HEK293 (cell line): ENCODE measurements at regions of chr6 and their contacts with region 1.

Region 1: DNA sequence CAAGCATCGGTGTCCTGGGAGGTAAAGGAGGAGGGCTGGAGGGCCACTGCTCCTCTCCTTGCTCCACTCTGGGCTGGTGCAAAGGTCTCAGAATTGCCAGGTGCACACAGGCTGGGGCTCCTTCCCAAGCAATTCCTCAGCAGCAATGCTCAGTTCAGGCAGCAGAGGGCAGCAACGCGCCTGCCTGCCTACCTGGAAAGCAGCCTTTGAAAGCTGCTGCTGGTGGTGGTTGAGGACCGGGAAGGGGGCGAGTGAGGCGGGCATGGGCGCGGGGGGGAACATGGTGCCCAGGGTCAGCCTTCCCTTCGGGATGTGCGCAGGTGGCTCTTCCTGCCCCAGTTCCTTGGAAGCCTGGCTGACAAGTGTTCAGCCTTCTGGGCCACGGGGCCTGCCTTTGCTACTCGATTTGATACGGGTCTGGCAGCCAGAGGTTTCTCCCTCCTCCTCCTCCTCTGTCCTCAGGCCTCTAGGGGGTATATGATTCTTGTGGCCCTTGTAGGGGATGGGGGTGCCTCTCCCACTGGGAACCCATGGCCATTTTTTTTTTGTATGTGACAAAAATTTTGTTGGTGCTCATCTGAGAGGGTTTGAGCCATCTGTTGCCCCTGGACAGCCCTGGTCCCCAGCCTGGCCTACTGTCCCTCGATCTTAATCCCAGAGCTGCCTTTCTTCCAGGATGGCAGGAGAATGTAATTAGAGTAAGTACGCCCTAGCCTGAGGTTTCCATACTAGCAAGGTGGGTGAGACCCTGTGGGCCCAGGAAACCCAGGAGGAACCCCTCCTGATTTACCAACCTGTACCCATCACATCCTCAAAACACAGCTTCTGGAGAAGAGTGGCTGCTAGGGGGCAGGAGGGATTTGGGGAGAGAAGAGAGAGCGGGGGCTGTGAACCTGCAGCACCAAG is 20.1 kb downstream of the MRPS18A start:
- H3K4me3 ChIP-seq: peak overlapping the region; percentile 10; the same call in 1 of the 2 replicates
- H3K27ac ChIP-seq: peak overlapping the region; percentile 19
- H3K4me1 ChIP-seq: peaks cover 3% of the 10 kb centered on the region; the same call in 1 of the 2 replicates
- CTCF ChIP-seq: peak; percentile 97

Region 2: GRCh38 chr6:43608310-43608763 is 59.2 kb before region 1 on chr6:
- CTCF ChIA-PET with region 1: interaction called, 28 read pairs
- POLR2A ChIA-PET with region 1: no interaction called
- H3K4me3 ChIP-seq: no peak overlapping the region
- H3K27ac ChIP-seq: no peak overlapping the region
- H3K4me1 ChIP-seq: no peaks in the 10 kb centered on the region
- CTCF ChIP-seq: peak; percentile 83

Region 3: GRCh38 chr6:43644931-43645612 is 22.4 kb before region 1 on chr6 and contains the start of gene RSPH9:
- CTCF ChIA-PET with region 1: interaction called, 14 read pairs
- POLR2A ChIA-PET with region 1: interaction called, 4 read pairs
- H3K4me3 ChIP-seq: peak within 1 kb of the TSS; percentile 37
- H3K27ac ChIP-seq: peak within 1 kb of the TSS; percentile 46; the same call in 1 of the 2 replicates
- H3K4me1 ChIP-seq: peaks cover 7% of the 10 kb centered on the region
- CTCF ChIP-seq: no peak

Region 4: DNA sequence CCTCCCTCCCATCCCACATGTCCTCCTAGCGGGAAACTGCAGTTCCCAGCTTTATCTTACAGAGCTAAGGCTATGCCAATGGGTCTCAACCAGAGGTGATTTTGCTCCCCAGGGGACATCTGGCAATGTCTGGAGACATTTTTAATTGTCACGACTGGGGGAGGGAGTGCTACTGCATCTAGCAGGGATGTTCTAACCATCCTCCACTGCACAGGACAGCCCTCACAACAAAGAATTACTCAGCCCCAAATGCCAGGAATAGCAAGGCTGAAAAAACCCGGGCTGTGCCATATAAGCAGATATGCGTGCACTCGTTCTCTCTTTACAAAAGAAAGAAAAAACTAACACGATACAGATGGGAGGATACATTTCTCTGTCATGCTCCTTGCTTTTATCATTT is 11.6 kb after region 1 on chr6:
- CTCF ChIA-PET with region 1: interaction called, 101 read pairs
- POLR2A ChIA-PET with region 1: interaction called, 4 read pairs
- H3K4me3 ChIP-seq: no peak overlapping the region
- H3K27ac ChIP-seq: no peak overlapping the region
- H3K4me1 ChIP-seq: peaks cover 15% of the 10 kb centered on the region
- CTCF ChIP-seq: no peak

Region 5: GRCh38 chr6:43695215-43695966 is 27.9 kb after region 1 on chr6:
- CTCF ChIA-PET with region 1: interaction called, 101 read pairs
- POLR2A ChIA-PET with region 1: no interaction called
- H3K4me3 ChIP-seq: no peak overlapping the region
- H3K27ac ChIP-seq: no peak overlapping the region; the same call in 1 of the 2 replicates
- H3K4me1 ChIP-seq: peaks cover 16% of the 10 kb centered on the region
- CTCF ChIP-seq: no peak

Region 6: GRCh38 chr6:43723737-43724295 is 56.3 kb after region 1 on chr6:
- CTCF ChIA-PET with region 1: interaction called, 50 read pairs
- POLR2A ChIA-PET with region 1: interaction called, 10 read pairs
- H3K4me3 ChIP-seq: no peak overlapping the region
- H3K27ac ChIP-seq: no peak overlapping the region
- H3K4me1 ChIP-seq: peaks cover 10% of the 10 kb centered on the region
- CTCF ChIP-seq: peak; percentile 89

Region 7: DNA sequence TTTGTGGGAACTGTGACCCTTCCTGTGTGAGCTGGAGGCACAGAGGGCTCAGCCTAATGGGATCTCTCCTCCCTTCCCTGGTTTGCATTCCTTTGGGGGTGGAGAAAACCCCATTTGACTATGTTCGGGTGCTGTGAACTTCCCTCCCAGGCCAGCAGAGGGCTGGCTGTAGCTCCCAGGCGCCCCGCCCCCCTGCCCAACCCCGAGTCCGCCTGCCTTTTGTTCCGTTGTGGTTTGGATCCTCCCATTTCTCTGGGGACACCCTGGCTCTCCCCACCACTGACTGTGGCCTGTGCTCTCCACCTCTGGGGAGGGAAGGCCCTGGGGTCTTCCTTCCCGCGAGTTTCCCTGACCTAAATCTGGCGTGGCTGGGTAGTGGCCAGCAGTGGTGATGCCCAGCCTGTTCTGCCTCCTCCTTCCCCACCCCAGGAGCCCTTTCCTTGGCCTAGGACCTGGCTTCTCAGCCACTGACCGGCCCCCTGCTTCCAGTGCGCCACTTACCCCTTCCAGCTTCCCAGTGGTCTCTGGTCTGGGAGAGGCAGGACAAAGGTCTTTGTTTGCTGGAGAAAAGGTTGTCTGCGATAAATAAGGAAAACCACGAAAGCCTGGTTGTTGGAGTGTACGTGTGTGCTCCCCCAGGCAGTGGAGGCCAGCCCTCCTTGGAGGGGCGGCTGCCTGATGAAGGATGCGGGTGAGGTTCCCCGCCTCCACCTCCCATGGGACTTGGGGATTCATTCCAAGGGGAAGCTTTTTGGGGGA is 107.5 kb after region 1 on chr6:
- CTCF ChIA-PET with region 1: interaction called, 56 read pairs
- POLR2A ChIA-PET with region 1: interaction called, 36 read pairs
- H3K4me3 ChIP-seq: no peak overlapping the region
- H3K27ac ChIP-seq: no peak overlapping the region
- H3K4me1 ChIP-seq: peaks cover 10% of the 10 kb centered on the region
- CTCF ChIP-seq: peak; percentile 81